Left ventricle myocardium superior (tissue), 1 donor: ENCODE measurements at regions of chr7 and their contacts with region 1.

Region 1: DNA sequence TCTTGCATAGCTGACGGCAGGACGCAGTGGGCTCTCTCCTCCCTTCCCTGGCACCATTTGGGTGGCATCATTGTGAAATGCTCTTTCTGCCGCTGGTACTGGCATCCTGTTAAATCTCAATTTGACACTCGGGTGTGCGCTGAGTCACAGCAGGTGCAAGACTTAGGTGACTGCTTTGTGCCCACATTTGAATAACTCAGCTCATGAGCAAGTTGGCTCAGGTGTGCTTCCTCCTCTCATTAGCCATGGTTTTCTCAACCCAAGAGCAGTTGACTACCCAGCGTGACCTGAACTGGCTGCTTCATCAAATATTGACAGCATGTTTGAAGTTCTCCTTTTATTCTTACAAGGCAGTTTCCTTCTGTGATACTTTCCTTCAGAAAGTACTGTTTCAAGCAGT is 24.6 kb upstream of the NFE2L3 start:
- DNase-seq: no peak
- ATAC-seq: no peak

Region 2: GRCh38 chr7:25429731-25430130 is 697.7 kb before region 1 on chr7:
- intact Hi-C with region 1: no loop called
- DNase-seq: no peak
- ATAC-seq: peak; percentile 53

Region 3: DNA sequence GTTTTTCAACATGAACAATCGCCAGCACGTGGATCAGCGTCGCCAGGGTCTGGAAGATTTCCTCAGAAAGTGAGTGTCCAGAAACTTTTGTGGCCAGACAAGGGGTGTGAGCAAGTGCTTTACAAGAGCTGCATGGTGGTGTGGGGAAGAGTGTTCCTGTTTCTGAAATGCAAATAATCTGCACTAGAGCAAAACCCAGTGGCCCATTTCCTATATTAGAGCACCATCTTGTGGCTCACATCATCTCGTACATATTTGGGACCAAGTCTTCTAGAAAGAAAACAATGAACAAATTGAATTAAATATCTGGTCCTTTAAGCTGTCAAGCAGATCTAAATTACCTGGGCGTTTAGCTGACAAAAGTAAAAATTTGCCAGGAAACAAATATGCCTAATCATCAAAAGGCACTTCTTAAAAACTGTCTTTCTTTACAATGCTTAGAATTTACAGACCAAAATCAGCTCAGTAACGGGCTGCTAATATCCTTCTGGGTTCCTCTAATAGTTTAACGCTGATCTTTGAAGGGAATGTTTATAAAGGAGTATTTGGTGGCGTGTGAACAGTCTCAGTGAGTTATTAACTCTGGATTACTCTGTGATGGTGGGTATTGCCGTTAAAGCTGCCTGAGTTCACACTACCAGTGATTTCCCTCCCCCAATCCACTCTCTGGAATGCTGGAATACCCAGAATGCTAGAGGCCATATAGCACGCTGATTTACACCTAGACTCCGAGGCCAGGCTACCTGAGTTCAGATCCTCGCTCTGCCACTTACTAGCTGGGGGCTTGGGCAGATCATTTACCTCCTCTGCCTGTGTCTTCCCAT is 237.9 kb after region 1 on chr7:
- intact Hi-C with region 1: no loop called
- DNase-seq: no peak
- ATAC-seq: peak; percentile 74

Region 4: GRCh38 chr7:26978146-26978545 is 850.7 kb after region 1 on chr7:
- intact Hi-C with region 1: loop called (anchors 5 kb)
- DNase-seq: no peak
- ATAC-seq: no peak